ENCODE measurements at regions of chr2 and their contacts with region 1.

Region 1: DNA sequence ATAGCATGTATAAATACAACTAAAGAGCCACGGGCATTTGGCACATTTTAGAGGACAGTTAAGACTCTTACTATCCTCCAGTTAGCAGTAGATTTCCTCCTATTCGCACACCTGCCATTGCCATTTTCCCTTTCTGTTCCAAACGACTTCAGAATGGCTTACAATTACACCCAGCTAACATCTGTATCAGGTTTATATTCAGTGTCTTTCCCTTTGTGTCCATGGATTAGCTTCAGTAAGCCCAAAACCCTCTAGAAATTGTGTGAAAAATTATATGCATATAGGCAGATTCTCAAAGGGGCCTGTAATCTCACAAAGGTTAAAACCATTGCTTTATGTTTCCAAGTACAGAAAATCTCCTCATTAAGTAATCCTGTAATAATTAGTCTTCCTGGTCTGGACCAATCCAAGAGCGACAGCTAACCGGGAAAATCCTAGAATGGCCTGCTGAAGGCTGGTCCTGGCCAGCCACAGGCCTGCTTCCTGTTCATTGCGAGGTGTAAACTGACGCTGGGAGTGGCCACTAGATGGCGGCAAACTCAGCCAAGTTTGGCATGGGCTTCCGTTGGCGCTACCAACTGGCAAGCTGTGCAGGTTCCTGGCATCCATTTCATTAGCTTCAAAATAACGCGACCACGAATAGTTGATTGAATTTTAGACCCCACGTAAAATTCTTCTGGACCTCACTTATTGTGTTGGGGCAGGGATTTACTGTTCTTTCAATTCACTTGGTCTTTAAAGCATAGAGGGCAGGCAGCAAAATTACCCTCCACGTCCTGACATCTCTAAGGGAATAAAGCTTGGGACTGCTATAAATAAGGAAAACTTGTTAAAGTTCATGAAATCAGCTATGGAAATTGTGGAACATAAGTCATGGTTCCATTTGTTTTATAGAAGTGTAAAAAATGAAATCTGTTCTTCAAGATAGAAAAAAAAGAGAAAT is 17.1 kb downstream of the ARHGAP25 start:
- DNase-seq: peak; percentile 75
- CTCF ChIP-seq: peak; percentile 96

Region 2: DNA sequence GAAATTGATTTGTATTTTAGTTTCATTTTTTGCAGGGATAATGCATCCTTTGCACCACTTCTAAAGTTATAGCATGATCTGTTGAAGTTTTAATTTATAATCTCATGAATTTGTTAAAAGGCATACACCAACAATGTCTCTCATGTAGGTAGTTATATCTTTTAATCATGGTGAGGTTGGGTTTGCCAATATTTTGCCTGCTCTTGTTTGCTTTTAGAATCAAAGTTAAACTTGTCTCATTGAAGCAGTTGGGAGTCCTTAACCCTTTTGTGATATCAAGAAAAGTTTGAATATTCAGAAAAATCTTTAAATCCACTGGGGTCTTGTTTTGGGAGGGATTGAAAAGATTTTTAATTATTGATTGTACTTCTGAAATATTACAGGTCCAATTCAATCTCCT is 252.5 kb before region 1 on chr2:
- CTCF ChIA-PET with region 1: no interaction called
- POLR2A ChIA-PET with region 1: no interaction called
- DNase-seq: no peak
- CTCF ChIP-seq: no peak

Region 3: GRCh38 chr2:68709421-68709911 is 42.2 kb before region 1 on chr2:
- CTCF ChIA-PET with region 1: interaction called, 11 read pairs
- POLR2A ChIA-PET with region 1: no interaction called
- DNase-seq: no peak
- CTCF ChIP-seq: peak; percentile 50

Region 4: DNA sequence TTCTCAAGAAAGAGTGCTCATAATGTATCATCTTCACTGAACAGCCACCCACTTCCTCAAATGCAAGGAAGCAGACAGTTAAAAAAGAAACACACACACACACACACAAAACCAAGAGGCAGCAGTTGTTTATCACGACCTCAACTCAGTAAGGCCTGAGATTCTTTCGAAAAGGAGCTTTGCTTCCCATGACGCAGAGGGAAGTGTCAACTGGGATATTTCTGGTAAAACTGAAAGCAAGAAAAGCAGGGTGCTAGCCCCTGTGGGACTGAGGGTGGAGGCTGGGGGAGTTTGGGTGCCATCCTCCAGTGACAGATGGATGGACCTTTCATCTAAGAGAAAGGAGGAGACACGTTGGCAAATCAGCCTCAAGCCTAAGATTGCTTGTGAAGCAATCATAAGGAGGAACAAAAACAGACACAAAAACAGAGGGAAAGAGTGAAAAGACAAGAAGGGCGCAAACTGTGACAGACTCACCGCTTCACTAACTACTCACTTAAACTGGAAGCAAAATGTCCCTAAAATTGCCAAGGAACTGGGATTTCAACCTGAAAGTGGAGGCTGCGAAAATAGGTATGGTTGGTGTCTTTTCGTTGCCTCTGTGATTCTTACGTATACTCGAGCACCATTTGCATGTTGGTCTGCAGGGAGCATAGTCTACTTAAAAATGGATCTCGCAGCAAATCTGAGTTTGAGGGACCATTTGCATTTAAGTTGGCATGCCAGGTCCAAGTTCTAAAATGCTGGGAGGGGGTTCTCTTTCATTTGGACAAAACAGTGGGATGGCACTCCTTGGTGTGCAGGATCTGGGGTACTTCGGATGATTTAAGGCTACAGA is 16.8 kb before region 1 on chr2 and contains the start of gene ARHGAP25:
- CTCF ChIA-PET with region 1: interaction called, 99 read pairs
- POLR2A ChIA-PET with region 1: no interaction called
- DNase-seq: peak; percentile 44
- CTCF ChIP-seq: peak; percentile 17

Region 5: DNA sequence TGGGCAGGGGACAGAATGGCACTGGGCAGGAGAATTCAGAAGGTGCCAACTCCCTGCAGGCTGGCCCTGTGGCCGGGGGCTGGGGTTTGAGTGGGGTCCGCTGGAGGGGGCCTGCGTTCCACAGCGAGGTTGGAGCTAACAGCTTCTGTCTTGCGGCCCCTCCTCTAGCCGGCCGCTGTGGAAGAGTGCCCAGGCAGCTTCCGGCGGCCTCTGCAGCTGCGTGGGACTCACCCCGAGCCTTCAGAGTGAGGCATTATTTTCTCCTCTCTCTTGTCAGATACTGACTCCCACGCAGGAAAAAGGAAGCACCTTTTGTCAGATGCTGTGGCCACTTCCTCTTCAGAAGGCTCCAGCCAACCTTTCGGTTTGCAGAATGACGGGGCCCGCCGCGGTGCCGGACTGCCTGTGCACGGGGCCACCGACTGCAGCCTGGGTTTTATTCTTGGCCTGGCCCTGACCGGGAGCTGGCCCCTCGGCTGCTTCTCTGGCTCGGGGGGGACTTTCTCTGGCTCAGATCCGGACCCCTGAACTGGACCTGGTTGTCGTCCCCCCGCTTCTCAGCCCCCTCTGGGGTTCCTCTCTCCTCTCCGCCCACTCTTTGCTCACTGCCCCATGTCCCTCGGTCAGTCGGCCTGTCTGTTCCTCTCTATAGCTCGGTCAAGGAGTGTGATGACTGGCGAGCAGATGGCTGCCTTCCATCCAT is 23.1 kb after region 1 on chr2:
- CTCF ChIA-PET with region 1: interaction called, 61 read pairs
- POLR2A ChIA-PET with region 1: interaction called, 4 read pairs
- DNase-seq: peak; percentile 89
- CTCF ChIP-seq: no peak

Region 6: GRCh38 chr2:68837164-68837860 is 85.6 kb after region 1 on chr2:
- CTCF ChIA-PET with region 1: interaction called, 20 read pairs
- POLR2A ChIA-PET with region 1: no interaction called
- DNase-seq: peak; percentile 57
- CTCF ChIP-seq: peak; percentile 80

Region 7: GRCh38 chr2:68909793-68910674 is 158.4 kb after region 1 on chr2:
- CTCF ChIA-PET with region 1: interaction called, 79 read pairs
- POLR2A ChIA-PET with region 1: no interaction called
- DNase-seq: peak; percentile 70
- CTCF ChIP-seq: peak; percentile 90

Measured in GM10248 (cell line).